ENCODE measurements at regions of chr11 and their contacts with region 1.

Region 1: GRCh38 chr11:18540207-18541009 is 13.7 kb upstream of the TSG101 start:
- DNase-seq: no peak
- H3K4me3 ChIP-seq: no peak overlapping the region
- H3K27ac ChIP-seq: no peak overlapping the region
- H3K4me1 ChIP-seq: no peaks in the 10 kb centered on the region
- H3K27me3 ChIP-seq: no peaks in the 10 kb centered on the region
- CTCF ChIP-seq: peak; percentile 18 to 52 (median 40)
- POLR2A ChIP-seq: no peak

Region 2: DNA sequence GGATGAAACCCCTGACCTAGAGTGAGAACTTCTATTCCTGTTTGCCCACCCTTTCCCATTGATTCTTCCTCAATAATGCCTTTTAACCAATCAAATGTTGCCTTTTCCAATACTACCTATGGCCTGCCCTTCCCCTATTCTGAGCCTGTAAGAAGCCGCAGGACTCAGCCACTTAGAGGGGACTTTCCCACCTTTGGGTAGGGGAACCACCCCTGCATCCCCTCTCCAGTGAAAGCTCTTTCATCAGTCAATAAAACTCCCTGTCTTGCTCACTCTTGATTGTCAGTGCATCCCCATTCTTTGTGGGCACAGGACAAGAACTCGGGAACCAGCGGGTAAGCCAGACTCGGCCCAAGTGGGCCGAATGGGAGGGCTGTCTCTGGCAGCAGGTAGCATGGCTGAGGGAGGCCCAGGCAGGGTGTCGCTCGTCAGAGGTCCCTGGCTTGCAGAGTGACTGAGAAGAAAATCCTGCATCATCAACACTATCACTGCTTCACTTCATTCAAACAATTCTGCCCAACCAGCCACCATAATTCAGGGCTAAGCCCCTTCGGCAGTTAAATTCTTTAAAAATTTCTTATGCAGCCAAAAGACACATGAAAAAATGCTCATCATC is 54.4 kb before region 1 on chr11:
- intact Hi-C with region 1: loop called in 1 of 2 experiments (anchors 10 kb)
- DNase-seq: no peak
- H3K4me3 ChIP-seq: no peak overlapping the region
- H3K27ac ChIP-seq: no peak overlapping the region
- H3K4me1 ChIP-seq: no peaks in the 10 kb centered on the region
- H3K27me3 ChIP-seq: no peaks in the 10 kb centered on the region
- CTCF ChIP-seq: no peak
- POLR2A ChIP-seq: no peak

Region 3: GRCh38 chr11:18721561-18722292 is 181.3 kb after region 1 on chr11:
- intact Hi-C with region 1: loop called in 1 of 2 experiments (anchors 10 kb)
- DNase-seq: peak in 5 of 7 donors; percentile 31 to 54 (median 40)
- H3K4me3 ChIP-seq: peak overlapping the region in 3 of 4 donors; percentile 15 to 66 (median 55)
- H3K27ac ChIP-seq: peak overlapping the region in 3 of 5 donors; percentile 26 to 75 (median 64)
- H3K4me1 ChIP-seq: peaks cover 0 to 11% of the 10 kb centered on the region in 2 donors
- H3K27me3 ChIP-seq: no peaks in the 10 kb centered on the region
- CTCF ChIP-seq: peak; percentile 49 to 70 (median 64)
- POLR2A ChIP-seq: no peak